HEK293 (cell line): ENCODE measurements at regions of chr19 and their contacts with region 1.

Region 1: GRCh38 chr19:48872182-48872883 is at the start of gene PPP1R15A:
- H3K4me3 ChIP-seq: peak within 1 kb of the TSS; percentile 80
- H3K27ac ChIP-seq: peak within 1 kb of the TSS; percentile 93
- H3K4me1 ChIP-seq: peaks cover 32% of the 10 kb centered on the region
- CTCF ChIP-seq: 0 out of 2 replicates have a peak, but pooled peaks have one; percentile 32

Region 2: GRCh38 chr19:48332662-48333466 is 539.5 kb before region 1 on chr19:
- CTCF ChIA-PET with region 1: no interaction called
- POLR2A ChIA-PET with region 1: no interaction called
- H3K4me3 ChIP-seq: peak overlapping the region; percentile 26
- H3K27ac ChIP-seq: peak overlapping the region; percentile 85
- H3K4me1 ChIP-seq: peaks cover 15% of the 10 kb centered on the region
- CTCF ChIP-seq: no peak

Region 3: GRCh38 chr19:48728882-48729645 is 143.3 kb before region 1 on chr19:
- CTCF ChIA-PET with region 1: no interaction called
- POLR2A ChIA-PET with region 1: no interaction called
- H3K4me3 ChIP-seq: no peak overlapping the region
- H3K27ac ChIP-seq: no peak overlapping the region
- H3K4me1 ChIP-seq: no peaks in the 10 kb centered on the region; the same call in 1 of the 2 replicates
- CTCF ChIP-seq: no peak

Region 4: DNA sequence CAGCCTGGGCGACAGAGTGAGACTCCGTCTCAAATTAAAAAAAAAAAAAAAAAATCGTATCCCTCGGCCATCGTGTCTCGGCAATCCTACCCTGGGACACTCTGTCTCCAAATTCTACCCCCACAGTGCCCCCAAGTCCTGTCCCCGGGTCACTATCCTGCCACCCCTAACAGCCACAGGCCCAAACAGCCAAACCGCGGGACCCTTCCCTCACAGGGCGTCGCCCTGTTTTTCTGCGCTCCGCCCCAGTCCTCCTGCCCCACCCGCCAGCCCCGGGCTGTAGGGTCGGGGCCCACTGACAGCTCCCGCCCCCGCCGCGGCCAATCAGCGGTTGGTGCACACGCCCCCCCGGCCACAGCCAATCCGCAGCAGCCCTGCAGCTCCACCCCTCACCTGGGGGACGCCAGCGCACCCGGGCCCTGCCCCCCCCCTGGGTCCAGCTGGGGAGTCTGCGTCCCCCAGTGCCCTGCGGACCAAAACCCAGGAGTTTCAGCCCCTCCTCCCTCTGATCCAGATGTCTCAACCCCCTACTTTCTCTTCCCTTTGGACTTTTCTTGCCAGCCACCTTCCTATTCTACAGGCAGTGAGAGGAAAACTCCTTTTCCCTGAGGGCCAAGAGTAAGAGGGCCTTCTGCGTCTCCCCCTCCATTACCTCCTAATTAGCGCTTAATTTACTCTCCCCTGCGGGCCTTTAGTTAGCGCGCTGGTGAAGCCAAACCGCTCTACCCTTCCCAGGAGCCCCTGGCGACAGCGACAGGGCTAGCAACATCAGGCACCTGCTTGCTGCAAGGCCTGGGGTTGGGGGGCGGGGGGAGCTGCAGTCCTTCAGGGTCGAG is 60.0 kb before region 1 on chr19:
- CTCF ChIA-PET with region 1: no interaction called
- POLR2A ChIA-PET with region 1: interaction called, 13 read pairs
- H3K4me3 ChIP-seq: peak overlapping the region; percentile 22
- H3K27ac ChIP-seq: peak overlapping the region; percentile 38
- H3K4me1 ChIP-seq: peaks cover 5% of the 10 kb centered on the region
- CTCF ChIP-seq: 0 out of 2 replicates have a peak, but pooled peaks have one; percentile 3

Region 5: DNA sequence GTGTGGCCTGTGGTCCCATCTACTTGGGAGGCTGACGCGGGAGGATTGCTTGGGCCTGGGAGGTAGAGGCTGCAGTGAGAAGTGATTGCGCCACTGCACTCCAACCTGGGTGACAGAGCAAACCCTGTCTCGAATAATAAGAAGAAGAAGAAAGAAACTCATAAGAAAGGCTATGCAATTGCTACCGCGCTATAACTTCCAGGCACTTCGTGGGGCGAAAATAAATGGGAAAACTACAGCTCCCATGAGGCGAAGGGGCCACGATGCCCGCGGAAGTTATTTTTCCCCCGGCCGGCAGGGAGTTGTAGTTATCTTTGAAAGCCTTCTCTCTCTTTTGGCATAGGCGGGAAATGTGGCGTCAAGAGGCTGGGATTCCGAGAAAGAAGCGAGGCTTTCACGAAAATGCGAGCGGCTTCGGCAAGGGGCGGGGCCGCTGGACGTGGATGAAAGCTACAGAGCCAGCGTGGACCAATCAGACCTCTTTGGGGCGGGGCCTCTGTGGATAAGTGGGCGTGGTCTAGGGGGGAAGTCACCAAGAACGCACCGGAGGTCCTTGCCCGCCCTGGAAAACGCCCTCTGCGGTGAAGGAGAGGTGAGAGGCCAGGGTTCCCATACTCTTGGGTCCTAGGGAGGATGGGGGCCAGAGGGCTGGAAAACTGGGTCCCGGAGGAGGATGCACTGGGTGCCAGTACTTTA is 27.6 kb after region 1 on chr19 and contains the start of gene NUCB1:
- CTCF ChIA-PET with region 1: interaction called, 3 read pairs
- POLR2A ChIA-PET with region 1: interaction called, 30 read pairs
- H3K4me3 ChIP-seq: peak within 1 kb of the TSS; percentile 54
- H3K27ac ChIP-seq: peak within 1 kb of the TSS; percentile 62
- H3K4me1 ChIP-seq: no peaks in the 10 kb centered on the region
- CTCF ChIP-seq: peak; percentile 22; the same call in 1 of the 2 replicates

Region 6: DNA sequence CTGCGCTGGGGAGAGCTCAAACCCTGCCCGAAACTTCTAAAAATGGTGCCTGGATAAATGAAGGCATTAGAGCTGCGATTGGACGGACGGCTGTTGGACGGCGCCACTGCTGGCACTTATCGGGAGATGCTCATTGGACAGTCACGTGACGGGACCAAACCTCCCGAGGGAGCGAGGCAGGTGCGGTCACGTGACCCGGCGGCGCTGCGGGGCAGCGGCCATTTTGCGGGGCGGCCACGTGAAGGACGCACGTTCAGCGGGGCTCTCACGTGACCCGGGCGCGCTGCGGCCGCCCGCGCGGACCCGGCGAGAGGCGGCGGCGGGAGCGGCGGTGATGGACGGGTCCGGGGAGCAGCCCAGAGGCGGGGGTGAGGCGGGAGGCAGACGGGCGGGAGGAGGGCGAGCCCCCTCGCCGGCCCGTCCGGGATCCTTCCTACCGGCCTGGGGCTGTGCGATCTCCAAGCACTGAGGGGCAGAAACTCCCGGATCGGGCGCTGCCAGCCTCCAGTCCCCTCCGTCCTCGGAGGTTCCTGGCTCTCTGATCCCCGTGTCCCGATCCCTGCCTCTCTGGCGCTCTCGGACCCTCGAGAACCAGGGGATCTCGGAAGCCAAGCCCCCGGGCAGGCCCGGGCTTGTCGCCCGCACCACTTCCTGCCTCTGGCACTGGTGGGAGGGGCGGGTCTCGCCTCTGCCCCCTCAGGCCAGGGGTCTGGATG is 82.4 kb after region 1 on chr19 and contains the start of gene BAX:
- CTCF ChIA-PET with region 1: no interaction called
- POLR2A ChIA-PET with region 1: interaction called, 12 read pairs
- H3K4me3 ChIP-seq: peak within 1 kb of the TSS; percentile 93
- H3K27ac ChIP-seq: peak within 1 kb of the TSS; percentile 93
- H3K4me1 ChIP-seq: peaks cover 5% of the 10 kb centered on the region
- CTCF ChIP-seq: peak; percentile 41

Region 7: GRCh38 chr19:48970923-48971395 is 98.6 kb after region 1 on chr19:
- CTCF ChIA-PET with region 1: interaction called, 10 read pairs
- POLR2A ChIA-PET with region 1: interaction called, 16 read pairs
- H3K4me3 ChIP-seq: no peak overlapping the region
- H3K27ac ChIP-seq: no peak overlapping the region
- H3K4me1 ChIP-seq: 0 out of 2 replicates have a peak, but pooled peaks cover 4% of the 10 kb centered on the region
- CTCF ChIP-seq: peak; percentile 91